ENCODE measurements at regions of chr11 and their contacts with region 1.

Region 1: GRCh38 chr11:95821640-95822039 is 31.3 kb downstream of the CEP57 start:
- DNase-seq: peak; percentile 53
- ATAC-seq: peak; percentile 96
- H3K4me3 ChIP-seq: no peak overlapping the region
- H3K27ac ChIP-seq: no peak overlapping the region
- H3K4me1 ChIP-seq: peaks cover 7% of the 10 kb centered on the region; the same call in 1 of the 2 replicates
- H3K27me3 ChIP-seq: no peaks in the 10 kb centered on the region
- CTCF ChIP-seq: no peak

Region 2: GRCh38 chr11:95835768-95836488 is 14.3 kb after region 1 on chr11:
- CTCF ChIA-PET with region 1: no interaction called
- POLR2A ChIA-PET with region 1: no interaction called
- intact Hi-C with region 1: no loop called
- DNase-seq: peak; percentile 94
- ATAC-seq: peak; percentile 61
- H3K4me3 ChIP-seq: no peak overlapping the region
- H3K27ac ChIP-seq: no peak overlapping the region
- H3K4me1 ChIP-seq: peaks cover 38% of the 10 kb centered on the region
- H3K27me3 ChIP-seq: no peaks in the 10 kb centered on the region
- CTCF ChIP-seq: peak; percentile 99

Region 3: GRCh38 chr11:95853138-95853537 is 31.5 kb after region 1 on chr11:
- CTCF ChIA-PET with region 1: no interaction called
- POLR2A ChIA-PET with region 1: no interaction called
- intact Hi-C with region 1: no loop called
- DNase-seq: no peak
- ATAC-seq: no peak
- H3K4me3 ChIP-seq: no peak overlapping the region
- H3K27ac ChIP-seq: no peak overlapping the region
- H3K4me1 ChIP-seq: peaks cover 29% of the 10 kb centered on the region
- H3K27me3 ChIP-seq: no peaks in the 10 kb centered on the region
- CTCF ChIP-seq: no peak

Region 4: DNA sequence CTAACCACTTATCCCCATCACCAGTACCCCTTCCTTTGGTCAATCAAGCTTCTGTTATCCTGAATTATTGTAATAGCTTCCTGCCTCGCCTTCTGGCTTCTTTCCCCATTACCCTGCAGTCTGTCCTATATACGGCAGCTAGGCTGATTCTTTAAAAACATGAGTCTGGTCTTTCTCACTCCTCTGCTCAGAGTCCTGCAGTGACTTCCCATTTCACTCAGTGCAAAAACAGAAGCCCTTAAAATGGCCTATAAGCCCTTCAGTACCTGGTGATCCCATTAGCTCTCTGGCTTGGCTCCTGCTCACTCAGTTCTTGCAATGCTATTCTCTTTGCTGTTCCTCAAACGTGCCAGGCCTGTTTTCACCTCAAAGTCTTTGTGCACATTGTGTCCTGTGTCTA is 626.6 kb after region 1 on chr11:
- CTCF ChIA-PET with region 1: interaction called, 10 read pairs
- POLR2A ChIA-PET with region 1: no interaction called
- intact Hi-C with region 1: no loop called
- DNase-seq: no peak
- ATAC-seq: no peak
- H3K4me3 ChIP-seq: no peak overlapping the region
- H3K27ac ChIP-seq: no peak overlapping the region
- H3K4me1 ChIP-seq: no peaks in the 10 kb centered on the region
- H3K27me3 ChIP-seq: peaks cover 87% of the 10 kb centered on the region
- CTCF ChIP-seq: no peak

Measured in PC-3 (cell line).